Endothelial cell of umbilical vein (primary cell): ENCODE measurements at regions of chr9 and their contacts with region 1.

Region 1: DNA sequence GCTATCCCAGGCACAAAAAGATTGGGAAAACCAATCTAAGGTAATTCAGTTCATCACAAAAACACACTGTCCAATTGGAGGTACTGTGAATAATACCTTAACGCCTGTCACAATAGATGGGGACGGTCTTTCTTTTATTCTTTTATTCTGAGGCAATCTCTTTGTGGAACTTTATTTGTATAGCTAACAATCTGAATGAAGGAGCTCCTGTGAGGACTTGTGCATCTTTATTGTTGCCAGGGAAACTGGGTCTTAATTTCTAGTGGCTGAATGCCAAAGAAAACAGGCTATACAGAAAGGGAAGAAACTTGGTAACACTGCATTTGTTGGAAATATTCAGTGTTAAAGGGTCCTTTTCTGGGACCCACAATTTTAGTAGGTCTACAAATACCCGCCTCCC is 546.9 kb upstream of the C9orf72 start:
- DNase-seq: peak; percentile 53
- H3K4me3 ChIP-seq: no peak overlapping the region
- H3K27ac ChIP-seq: no peak overlapping the region
- H3K4me1 ChIP-seq: peaks cover 5% of the 10 kb centered on the region
- H3K27me3 ChIP-seq: no peaks in the 10 kb centered on the region
- CTCF ChIP-seq: no peak
- POLR2A ChIP-seq: no peak

Region 2: DNA sequence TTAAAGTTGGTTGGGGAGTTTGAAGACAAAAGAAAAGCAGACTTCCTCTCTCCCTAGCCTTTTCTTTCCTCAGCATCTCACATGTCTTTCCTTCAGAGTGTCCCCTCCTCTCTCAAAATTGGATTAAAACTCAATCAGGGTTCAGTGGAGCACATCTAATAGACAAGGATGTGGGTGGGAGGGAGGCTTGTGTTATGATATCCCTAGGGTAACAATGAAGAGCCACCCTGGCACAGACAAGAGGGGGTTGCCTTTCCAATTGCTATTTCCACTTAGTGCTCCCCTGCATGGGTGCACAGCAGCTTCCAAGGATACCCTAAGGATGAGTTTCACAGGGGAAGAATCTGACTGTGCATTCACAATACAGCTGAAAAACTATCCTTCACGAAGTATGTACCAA is 38.3 kb after region 1 on chr9:
- CTCF ChIA-PET with region 1: no interaction called
- POLR2A ChIA-PET with region 1: no interaction called
- dilution Hi-C with region 1: no loop called
- intact Hi-C with region 1: no loop called
- DNase-seq: no peak
- H3K4me3 ChIP-seq: no peak overlapping the region
- H3K27ac ChIP-seq: no peak overlapping the region
- H3K4me1 ChIP-seq: no peaks in the 10 kb centered on the region
- H3K27me3 ChIP-seq: no peaks in the 10 kb centered on the region
- CTCF ChIP-seq: no peak
- POLR2A ChIP-seq: no peak

Region 3: DNA sequence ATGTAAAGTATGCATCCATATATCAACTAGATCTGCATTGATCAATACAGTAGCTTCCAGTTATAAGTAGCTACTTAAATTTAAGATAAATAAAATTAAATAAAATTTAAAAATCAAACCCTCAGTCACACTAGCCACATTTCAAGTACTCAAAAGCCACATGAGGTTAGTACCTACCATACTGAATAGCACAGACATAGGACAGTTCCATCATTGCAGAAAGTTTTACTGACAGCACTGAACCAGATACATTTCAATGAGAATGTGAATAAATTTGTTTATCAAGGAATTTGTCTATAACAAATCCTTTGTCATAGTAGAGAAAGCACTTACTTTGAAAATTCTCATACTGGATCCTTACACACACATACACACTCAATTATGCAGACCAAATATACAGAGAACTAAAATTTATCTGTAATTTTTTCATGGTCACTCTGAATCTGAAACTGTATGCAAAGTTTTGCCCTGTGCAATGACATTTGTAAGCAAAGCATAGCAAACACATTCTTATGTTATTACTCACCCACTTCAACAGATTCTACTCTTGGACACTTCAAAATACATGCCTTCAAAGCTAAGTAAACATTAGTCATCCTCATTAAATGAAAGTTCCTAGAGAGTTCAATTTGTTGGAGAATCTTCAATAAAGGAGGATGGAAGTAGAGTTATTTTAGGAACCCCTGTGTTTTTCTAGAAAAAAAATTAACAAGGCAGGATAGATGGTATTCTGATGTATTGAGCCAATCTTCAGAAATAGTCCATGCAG is 92.6 kb after region 1 on chr9:
- CTCF ChIA-PET with region 1: no interaction called
- POLR2A ChIA-PET with region 1: no interaction called
- dilution Hi-C with region 1: no loop called
- intact Hi-C with region 1: loop called (anchors 5 kb)
- DNase-seq: peak; percentile 73
- H3K4me3 ChIP-seq: no peak overlapping the region
- H3K27ac ChIP-seq: no peak overlapping the region
- H3K4me1 ChIP-seq: peaks cover 13% of the 10 kb centered on the region
- H3K27me3 ChIP-seq: no peaks in the 10 kb centered on the region
- CTCF ChIP-seq: no peak
- POLR2A ChIP-seq: no peak